GM12878 (cell line): ENCODE measurements at regions of chr7 and their contacts with region 1.

Region 1: DNA sequence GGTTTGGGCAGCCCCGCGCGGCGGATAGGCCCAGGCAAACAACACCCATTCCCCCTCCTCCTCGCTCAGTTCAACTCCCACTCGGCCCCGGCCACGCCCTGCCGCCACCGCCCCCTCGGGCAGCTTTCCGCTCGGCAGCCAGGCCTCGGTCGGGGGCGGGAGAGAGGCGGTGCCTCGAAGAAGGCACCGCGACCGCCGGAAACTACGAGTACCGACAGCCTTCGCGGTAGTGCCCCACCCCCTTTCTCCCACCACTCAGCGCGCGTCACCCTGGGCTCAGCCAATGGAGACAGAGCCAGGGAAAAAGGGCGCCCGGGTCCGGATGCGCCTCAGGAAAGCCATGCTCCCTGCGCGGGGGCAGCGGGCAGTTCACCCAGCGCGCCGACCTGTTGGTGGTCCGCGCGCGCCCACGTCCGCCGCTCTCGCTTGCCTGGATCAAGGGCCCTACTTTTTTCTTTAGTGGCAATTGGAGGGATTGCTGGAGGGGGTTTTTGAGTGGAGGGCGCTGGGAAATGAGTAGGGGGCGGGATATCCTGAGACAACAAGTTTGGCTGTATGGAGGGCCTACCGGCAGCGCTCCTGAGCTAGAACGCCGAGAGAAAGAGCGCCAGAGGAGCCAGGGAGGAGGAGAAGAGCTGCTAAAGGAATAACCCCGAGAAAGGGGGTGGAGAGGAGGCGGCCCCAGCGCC is 557 bp upstream of the SP4 start:
- DNase-seq: peak; percentile 92
- ATAC-seq: peak; percentile 87
- H3K4me3 ChIP-seq: peak overlapping the region; percentile 93
- H3K27ac ChIP-seq: peak overlapping the region; percentile 97
- H3K4me1 ChIP-seq: peaks cover 15% of the 10 kb centered on the region
- H3K27me3 ChIP-seq: no peaks in the 10 kb centered on the region
- CTCF ChIP-seq: peak in 2 of 3 experiments; percentile 3 to 15; a peak in 1 of 6 replicates
- EP300 ChIP-seq: 0 out of 4 replicates have a peak, but pooled peaks have one; percentile 0 to 34
- POLR2A ChIP-seq: peak; percentile 67
- RAD21 ChIP-seq: no peak

Region 2: DNA sequence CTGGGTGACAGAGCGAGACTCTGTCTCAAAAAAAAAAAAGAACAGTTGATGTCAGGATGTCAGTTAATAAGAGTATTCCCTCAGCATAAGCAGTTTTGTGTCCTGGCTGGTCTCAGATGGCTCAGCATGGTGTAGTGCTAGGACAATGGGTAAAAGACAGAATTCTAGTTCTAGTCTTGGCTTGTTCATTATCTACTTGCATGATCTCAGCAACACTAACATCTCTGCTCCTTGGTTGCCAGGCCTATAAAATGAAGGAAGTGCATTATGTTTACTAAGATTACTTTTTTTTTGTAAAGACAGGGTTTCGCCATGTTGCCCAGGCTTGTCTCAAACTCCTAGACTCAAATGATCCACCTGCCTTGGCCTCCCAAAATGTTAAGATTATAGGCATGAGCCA is 556.3 kb before region 1 on chr7:
- CTCF ChIA-PET with region 1: no interaction called
- POLR2A ChIA-PET with region 1: no interaction called
- RAD21 ChIA-PET with region 1: no interaction called
- SMC1A ChIA-PET with region 1: no interaction called
- in situ Hi-C with region 1: no loop called
- intact Hi-C with region 1: no loop called
- DNase-seq: no peak
- ATAC-seq: no peak
- H3K4me3 ChIP-seq: no peak overlapping the region
- H3K27ac ChIP-seq: no peak overlapping the region
- H3K4me1 ChIP-seq: no peaks in the 10 kb centered on the region
- H3K27me3 ChIP-seq: no peaks in the 10 kb centered on the region
- CTCF ChIP-seq: no peak
- EP300 ChIP-seq: no peak
- POLR2A ChIP-seq: no peak
- RAD21 ChIP-seq: no peak

Region 3: GRCh38 chr7:21173436-21173835 is 253.9 kb before region 1 on chr7:
- CTCF ChIA-PET with region 1: no interaction called
- POLR2A ChIA-PET with region 1: no interaction called
- RAD21 ChIA-PET with region 1: no interaction called
- SMC1A ChIA-PET with region 1: no interaction called
- in situ Hi-C with region 1: no loop called
- intact Hi-C with region 1: no loop called
- DNase-seq: no peak
- ATAC-seq: no peak
- H3K4me3 ChIP-seq: no peak overlapping the region
- H3K27ac ChIP-seq: no peak overlapping the region
- H3K4me1 ChIP-seq: no peaks in the 10 kb centered on the region
- H3K27me3 ChIP-seq: no peaks in the 10 kb centered on the region; a peak in 1 of 4 replicates
- CTCF ChIP-seq: no peak
- EP300 ChIP-seq: no peak
- POLR2A ChIP-seq: no peak
- RAD21 ChIP-seq: no peak

Region 4: GRCh38 chr7:21352540-21353387 is 74.6 kb before region 1 on chr7:
- CTCF ChIA-PET with region 1: interaction called, 4 read pairs
- POLR2A ChIA-PET with region 1: interaction called, 17 read pairs
- RAD21 ChIA-PET with region 1: interaction called, 18 read pairs
- SMC1A ChIA-PET with region 1: interaction called, 14 read pairs
- in situ Hi-C with region 1: no loop called
- intact Hi-C with region 1: loop called (anchors 1 kb)
- DNase-seq: peak; percentile 93
- ATAC-seq: peak; percentile 86
- H3K4me3 ChIP-seq: peak overlapping the region; percentile 43
- H3K27ac ChIP-seq: peak overlapping the region; percentile 85
- H3K4me1 ChIP-seq: peaks cover 38% of the 10 kb centered on the region
- H3K27me3 ChIP-seq: no peaks in the 10 kb centered on the region
- CTCF ChIP-seq: no peak
- EP300 ChIP-seq: peak; percentile 23 to 83; a peak in 3 of 4 replicates
- POLR2A ChIP-seq: no peak
- RAD21 ChIP-seq: peak; percentile 30; the same call in 1 of the 2 replicates

Region 5: GRCh38 chr7:21383227-21384220 is 43.8 kb before region 1 on chr7:
- CTCF ChIA-PET with region 1: no interaction called
- POLR2A ChIA-PET with region 1: interaction called, 9 read pairs
- RAD21 ChIA-PET with region 1: interaction called, 10 read pairs
- SMC1A ChIA-PET with region 1: interaction called, 8 read pairs
- in situ Hi-C with region 1: no loop called
- intact Hi-C with region 1: no loop called
- DNase-seq: no peak
- ATAC-seq: peak; percentile 88
- H3K4me3 ChIP-seq: no peak overlapping the region
- H3K27ac ChIP-seq: peak overlapping the region; percentile 72
- H3K4me1 ChIP-seq: peaks cover 13% of the 10 kb centered on the region
- H3K27me3 ChIP-seq: no peaks in the 10 kb centered on the region
- CTCF ChIP-seq: no peak
- EP300 ChIP-seq: no peak
- POLR2A ChIP-seq: no peak
- RAD21 ChIP-seq: no peak

Region 6: GRCh38 chr7:21443149-21443841 is 16.0 kb after region 1 on chr7:
- CTCF ChIA-PET with region 1: no interaction called
- POLR2A ChIA-PET with region 1: interaction called, 13 read pairs
- RAD21 ChIA-PET with region 1: interaction called, 4 read pairs
- SMC1A ChIA-PET with region 1: interaction called, 43 read pairs
- in situ Hi-C with region 1: no loop called
- intact Hi-C with region 1: no loop called
- DNase-seq: no peak
- ATAC-seq: no peak
- H3K4me3 ChIP-seq: no peak overlapping the region
- H3K27ac ChIP-seq: no peak overlapping the region
- H3K4me1 ChIP-seq: no peaks in the 10 kb centered on the region
- H3K27me3 ChIP-seq: no peaks in the 10 kb centered on the region
- CTCF ChIP-seq: no peak
- EP300 ChIP-seq: no peak
- POLR2A ChIP-seq: no peak
- RAD21 ChIP-seq: no peak

Region 7: GRCh38 chr7:21636694-21637093 is 209.4 kb after region 1 on chr7:
- CTCF ChIA-PET with region 1: no interaction called
- POLR2A ChIA-PET with region 1: no interaction called
- RAD21 ChIA-PET with region 1: no interaction called
- SMC1A ChIA-PET with region 1: no interaction called
- in situ Hi-C with region 1: no loop called
- intact Hi-C with region 1: no loop called
- DNase-seq: no peak
- ATAC-seq: peak; percentile 21; the same call in 1 of the 3 replicates
- H3K4me3 ChIP-seq: no peak overlapping the region
- H3K27ac ChIP-seq: no peak overlapping the region
- H3K4me1 ChIP-seq: no peaks in the 10 kb centered on the region
- H3K27me3 ChIP-seq: peaks cover 0 to 2% of the 10 kb centered on the region in 2 experiments; a peak in 1 of 4 replicates
- CTCF ChIP-seq: no peak
- EP300 ChIP-seq: no peak
- POLR2A ChIP-seq: no peak
- RAD21 ChIP-seq: no peak